Activated CD8-positive, alpha-beta T cell treated with anti-CD3 and anti-CD28 coated beads for 36 hours (primary cell): ENCODE measurements at regions of chr11 and their contacts with region 1.

Region 1: DNA sequence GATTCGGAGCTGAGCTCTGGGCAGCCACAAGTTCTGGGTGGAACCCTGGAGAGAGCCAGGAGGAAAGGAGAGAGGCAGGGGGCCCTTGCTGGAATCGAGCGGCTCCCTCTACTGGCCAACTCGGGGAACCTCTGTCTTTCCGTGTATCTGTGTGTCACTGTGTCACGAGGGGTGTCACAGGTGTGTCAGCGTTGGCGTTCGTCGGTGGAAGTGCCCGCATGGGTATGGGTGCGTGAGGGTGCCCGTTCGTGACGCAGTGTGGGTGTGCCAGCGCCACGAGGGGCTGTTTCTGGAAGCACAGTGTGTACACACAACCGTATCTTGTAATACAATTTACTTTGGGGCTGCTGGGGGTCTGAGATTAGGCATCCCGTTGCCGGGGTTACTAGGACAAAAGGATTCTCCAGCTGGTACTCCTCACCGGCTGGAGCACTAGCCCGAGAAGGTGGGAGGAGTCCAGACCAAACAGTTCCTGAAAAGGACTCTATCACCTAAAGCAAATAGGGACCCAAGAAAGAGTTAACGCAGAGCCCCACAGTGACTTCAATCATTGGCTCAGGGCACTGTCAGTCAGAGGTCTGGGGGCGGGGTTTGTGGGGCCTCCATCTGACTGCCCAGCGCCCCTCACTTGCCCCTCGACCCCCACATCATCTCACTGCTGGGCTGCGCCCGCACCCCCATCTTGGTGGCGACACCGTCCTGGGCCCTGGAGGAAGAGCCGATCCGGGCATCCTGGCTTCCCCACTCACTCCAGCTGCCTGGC is 2.6 kb upstream of the BCL9L start:
- DNase-seq: peak; percentile 94
- ATAC-seq: peak; percentile 54
- H3K4me3 Mint-ChIP-seq: peak overlapping the region; percentile 90
- H3K27ac Mint-ChIP-seq: peak overlapping the region; percentile 98
- H3K4me1 Mint-ChIP-seq: peaks cover 46% of the 10 kb centered on the region
- H3K27me3 Mint-ChIP-seq: no peaks in the 10 kb centered on the region
- CTCF ChIP-seq: peak; percentile 94

Region 2: DNA sequence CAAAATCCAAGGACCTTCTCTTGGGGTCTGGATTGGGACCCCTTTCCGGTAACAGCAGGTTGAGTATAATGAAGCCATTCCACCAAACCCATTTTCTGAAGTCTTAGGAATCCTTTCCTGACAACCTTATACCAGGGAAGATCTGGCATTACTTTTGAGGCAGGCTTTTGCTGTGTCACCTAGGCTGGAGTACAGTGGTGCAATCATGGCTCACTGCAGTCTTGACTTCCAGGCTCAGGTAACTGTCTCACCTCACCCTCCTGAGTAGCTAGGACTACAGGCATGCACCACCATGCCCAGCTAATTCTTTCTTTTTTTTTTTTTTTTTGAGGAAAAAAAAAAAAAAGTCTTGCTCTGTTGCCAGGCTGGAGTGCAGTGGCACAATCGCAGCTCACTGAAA is 193.1 kb before region 1 on chr11:
- CTCF ChIA-PET with region 1: no interaction called
- POLR2A ChIA-PET with region 1: no interaction called
- intact Hi-C with region 1: no loop called
- DNase-seq: no peak
- ATAC-seq: no peak
- H3K4me3 Mint-ChIP-seq: no peak overlapping the region
- H3K27ac Mint-ChIP-seq: no peak overlapping the region
- H3K4me1 Mint-ChIP-seq: no peaks in the 10 kb centered on the region
- H3K27me3 Mint-ChIP-seq: no peaks in the 10 kb centered on the region
- CTCF ChIP-seq: no peak

Region 3: GRCh38 chr11:118791111-118791965 is 137.0 kb before region 1 on chr11 and contains the start of gene DDX6:
- CTCF ChIA-PET with region 1: interaction called, 14 read pairs
- POLR2A ChIA-PET with region 1: interaction called, 33 read pairs
- intact Hi-C with region 1: loop called (anchors 5 kb)
- DNase-seq: peak; percentile 94
- ATAC-seq: peak; percentile 55
- H3K4me3 Mint-ChIP-seq: peak within 1 kb of the TSS; percentile 99
- H3K27ac Mint-ChIP-seq: peak within 1 kb of the TSS; percentile 100
- H3K4me1 Mint-ChIP-seq: peaks cover 17% of the 10 kb centered on the region
- H3K27me3 Mint-ChIP-seq: no peaks in the 10 kb centered on the region
- CTCF ChIP-seq: no peak
- total RNA-seq, gene DDX6: 155 to 158 TPM

Region 4: DNA sequence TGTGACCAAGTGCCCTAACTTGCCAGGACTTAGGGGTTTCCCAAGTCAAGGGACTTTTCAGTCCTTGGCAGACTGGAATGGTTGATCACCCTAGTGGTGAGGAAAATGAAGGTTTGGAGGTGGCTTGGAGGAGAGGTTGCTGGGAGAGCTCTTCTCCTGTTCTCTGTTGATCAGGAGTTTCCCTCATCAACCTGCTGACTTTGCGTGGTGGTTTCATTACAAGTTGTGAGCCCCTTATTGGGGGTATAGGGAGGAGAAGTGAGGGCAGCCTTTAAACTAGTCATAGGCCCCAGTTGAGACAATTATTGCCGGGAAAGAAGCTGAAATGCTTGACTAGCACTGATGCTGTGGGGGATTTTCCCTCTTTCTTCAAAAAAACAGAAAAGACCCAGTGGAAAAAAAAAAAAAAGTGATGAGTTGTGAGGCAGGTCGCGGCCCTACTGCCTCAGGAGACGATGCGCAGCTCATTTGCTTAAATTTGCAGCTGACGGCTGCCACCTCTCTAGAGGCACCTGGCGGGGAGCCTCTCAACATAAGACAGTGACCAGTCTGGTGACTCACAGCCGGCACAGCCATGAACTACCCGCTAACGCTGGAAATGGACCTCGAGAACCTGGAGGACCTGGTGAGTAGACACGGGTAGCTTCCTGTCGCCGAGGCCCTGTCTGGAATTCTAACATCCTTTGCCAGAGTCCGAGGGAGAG is 44.8 kb before region 1 on chr11 and contains the start of gene CXCR5:
- CTCF ChIA-PET with region 1: interaction called, 15 read pairs
- POLR2A ChIA-PET with region 1: no interaction called
- intact Hi-C with region 1: no loop called
- DNase-seq: peak; percentile 60
- ATAC-seq: peak; percentile 49
- H3K4me3 Mint-ChIP-seq: peak within 1 kb of the TSS; percentile 57
- H3K27ac Mint-ChIP-seq: peak within 1 kb of the TSS; percentile 77
- H3K4me1 Mint-ChIP-seq: peaks cover 67% of the 10 kb centered on the region
- H3K27me3 Mint-ChIP-seq: no peaks in the 10 kb centered on the region
- CTCF ChIP-seq: no peak
- total RNA-seq, gene CXCR5: 0.60 to 0.92 TPM

Region 5: DNA sequence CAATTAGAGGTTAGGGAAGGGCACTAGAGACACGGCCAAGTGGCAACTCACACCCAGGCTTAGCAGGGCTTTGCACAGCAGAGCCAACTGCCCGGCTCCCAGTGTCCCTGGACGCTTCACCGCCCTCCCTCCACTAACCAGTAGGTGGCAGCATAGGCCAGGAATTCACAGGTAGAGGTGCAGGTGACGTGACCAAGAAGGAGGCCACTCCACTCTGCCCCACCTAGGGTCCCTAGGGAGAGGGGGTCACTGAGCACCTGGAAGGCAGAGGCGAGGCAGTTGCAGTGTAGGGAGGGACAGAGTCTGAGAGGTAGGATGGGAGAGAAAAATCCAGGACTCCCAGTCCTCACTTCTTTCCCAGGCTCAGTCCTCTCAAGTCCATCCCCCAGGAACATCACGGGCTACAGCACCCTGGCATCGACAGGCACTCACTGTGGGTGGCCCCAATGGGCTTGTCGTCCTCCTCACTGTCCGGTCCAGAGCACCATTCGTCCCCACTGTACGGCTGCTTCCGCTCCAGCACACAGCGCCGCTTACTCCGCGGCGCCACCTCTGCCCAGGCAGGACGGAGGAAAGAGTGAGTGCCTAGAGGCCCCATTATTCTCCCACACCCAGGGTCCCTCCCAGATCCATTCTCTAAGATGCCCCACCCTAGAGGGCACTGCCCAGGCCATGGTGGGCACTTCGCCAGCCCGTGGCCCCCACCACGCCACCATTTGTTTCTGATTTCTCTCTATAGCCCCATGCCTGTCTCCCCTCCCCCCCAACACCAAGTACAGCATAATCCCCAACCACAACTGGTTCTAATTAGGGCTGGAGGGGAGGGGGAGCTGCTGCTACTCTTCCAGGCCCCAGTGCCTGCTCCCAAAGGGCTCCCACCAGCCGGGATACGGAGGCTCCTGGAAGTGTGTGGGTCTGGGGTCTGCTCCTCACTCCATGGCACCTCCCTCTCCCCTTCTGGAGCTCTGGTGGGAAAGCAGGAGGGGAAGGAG is 20.9 kb before region 1 on chr11:
- CTCF ChIA-PET with region 1: no interaction called
- POLR2A ChIA-PET with region 1: interaction called, 3 read pairs
- intact Hi-C with region 1: loop called (anchors 2 kb)
- DNase-seq: peak; percentile 92
- ATAC-seq: peak; percentile 61
- H3K4me3 Mint-ChIP-seq: no peak overlapping the region
- H3K27ac Mint-ChIP-seq: peak overlapping the region; percentile 85
- H3K4me1 Mint-ChIP-seq: peaks cover 46% of the 10 kb centered on the region
- H3K27me3 Mint-ChIP-seq: no peaks in the 10 kb centered on the region
- CTCF ChIP-seq: peak; percentile 86

Region 6: DNA sequence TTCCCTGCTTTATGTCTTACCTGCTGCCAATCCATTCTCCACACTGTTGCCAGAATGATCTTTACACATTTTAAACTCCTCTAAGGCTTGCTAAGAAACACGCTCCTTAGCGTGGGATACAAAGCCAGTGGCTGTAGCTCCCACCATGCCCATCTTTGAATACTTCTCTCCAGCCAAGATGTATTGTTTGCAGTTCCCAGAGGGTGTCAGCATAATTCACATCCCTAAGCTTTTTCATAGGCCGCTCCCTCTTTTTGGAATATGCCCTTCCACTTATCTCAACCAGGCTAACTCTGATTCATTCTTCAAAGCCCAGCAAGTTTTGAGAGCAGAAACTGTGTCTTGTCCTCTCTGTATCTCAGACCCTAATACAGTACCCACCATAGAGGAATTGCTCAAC is 19.7 kb after region 1 on chr11:
- CTCF ChIA-PET with region 1: interaction called, 18 read pairs
- POLR2A ChIA-PET with region 1: interaction called, 3 read pairs
- intact Hi-C with region 1: no loop called
- DNase-seq: no peak
- ATAC-seq: no peak
- H3K4me3 Mint-ChIP-seq: no peak overlapping the region
- H3K27ac Mint-ChIP-seq: no peak overlapping the region
- H3K4me1 Mint-ChIP-seq: peaks cover 5% of the 10 kb centered on the region
- H3K27me3 Mint-ChIP-seq: no peaks in the 10 kb centered on the region
- CTCF ChIP-seq: no peak

Region 7: DNA sequence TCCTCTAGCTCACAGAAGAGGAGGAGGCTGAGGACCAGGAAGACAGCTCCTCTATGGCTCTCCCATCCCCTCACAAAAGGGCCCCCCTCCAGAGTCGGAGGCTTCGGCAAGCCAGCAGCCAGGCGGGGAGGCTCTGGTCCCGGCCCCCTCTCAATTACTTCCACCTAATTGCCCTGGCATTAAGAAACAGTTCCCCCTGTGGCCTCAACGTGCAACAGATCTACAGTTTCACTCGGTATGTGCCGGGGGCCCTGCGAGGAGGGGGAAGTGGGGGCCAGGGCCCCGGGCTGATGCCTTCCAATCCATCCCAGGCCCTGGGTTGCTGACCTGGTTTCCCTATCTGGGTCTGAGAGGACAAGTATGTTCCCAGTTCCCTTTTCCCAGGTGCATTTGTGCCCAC is 51.1 kb after region 1 on chr11:
- CTCF ChIA-PET with region 1: no interaction called
- POLR2A ChIA-PET with region 1: no interaction called
- intact Hi-C with region 1: no loop called
- DNase-seq: no peak
- ATAC-seq: peak; percentile 47
- H3K4me3 Mint-ChIP-seq: no peak overlapping the region
- H3K27ac Mint-ChIP-seq: no peak overlapping the region
- H3K4me1 Mint-ChIP-seq: no peaks in the 10 kb centered on the region
- H3K27me3 Mint-ChIP-seq: peaks cover 6% of the 10 kb centered on the region
- CTCF ChIP-seq: no peak